PC-3 (cell line): ENCODE measurements at regions of chr2 and their contacts with region 1.

Region 1: DNA sequence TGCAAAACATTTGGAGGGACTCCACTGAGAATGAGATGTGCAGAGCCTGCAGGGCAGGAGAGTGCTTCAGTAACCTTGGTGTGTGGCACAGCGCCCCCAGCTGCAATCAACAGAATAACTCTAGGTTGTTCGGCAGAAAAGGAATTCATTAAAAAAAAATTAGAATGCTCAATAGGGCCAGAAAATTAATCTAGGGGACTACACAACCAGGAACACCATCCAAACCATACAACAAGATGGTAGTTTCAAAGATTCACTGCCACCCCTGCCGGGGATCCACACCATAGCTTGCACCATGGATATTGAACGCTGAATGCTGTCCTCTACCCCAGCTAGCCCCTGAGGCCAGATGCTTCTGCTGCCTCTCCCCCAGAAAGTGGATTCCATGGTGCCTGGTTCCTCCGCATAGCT is 50.1 kb downstream of the THUMPD2 start:
- DNase-seq: peak; percentile 57
- ATAC-seq: no peak
- H3K4me3 ChIP-seq: no peak overlapping the region
- H3K27ac ChIP-seq: no peak overlapping the region
- H3K4me1 ChIP-seq: peaks cover 21% of the 10 kb centered on the region
- H3K27me3 ChIP-seq: no peaks in the 10 kb centered on the region
- CTCF ChIP-seq: peak; percentile 94

Region 2: GRCh38 chr2:39593439-39594393 is 135.2 kb before region 1 on chr2:
- CTCF ChIA-PET with region 1: interaction called, 6 read pairs
- POLR2A ChIA-PET with region 1: no interaction called
- intact Hi-C with region 1: loop called (anchors 1 kb)
- DNase-seq: peak; percentile 79
- ATAC-seq: peak; percentile 97
- H3K4me3 ChIP-seq: no peak overlapping the region
- H3K27ac ChIP-seq: no peak overlapping the region
- H3K4me1 ChIP-seq: no peaks in the 10 kb centered on the region
- H3K27me3 ChIP-seq: no peaks in the 10 kb centered on the region
- CTCF ChIP-seq: peak; percentile 85